Common myeloid progenitor, CD34-positive (primary cell): ENCODE measurements at regions of chr9 and their contacts with region 1.

Region 1: DNA sequence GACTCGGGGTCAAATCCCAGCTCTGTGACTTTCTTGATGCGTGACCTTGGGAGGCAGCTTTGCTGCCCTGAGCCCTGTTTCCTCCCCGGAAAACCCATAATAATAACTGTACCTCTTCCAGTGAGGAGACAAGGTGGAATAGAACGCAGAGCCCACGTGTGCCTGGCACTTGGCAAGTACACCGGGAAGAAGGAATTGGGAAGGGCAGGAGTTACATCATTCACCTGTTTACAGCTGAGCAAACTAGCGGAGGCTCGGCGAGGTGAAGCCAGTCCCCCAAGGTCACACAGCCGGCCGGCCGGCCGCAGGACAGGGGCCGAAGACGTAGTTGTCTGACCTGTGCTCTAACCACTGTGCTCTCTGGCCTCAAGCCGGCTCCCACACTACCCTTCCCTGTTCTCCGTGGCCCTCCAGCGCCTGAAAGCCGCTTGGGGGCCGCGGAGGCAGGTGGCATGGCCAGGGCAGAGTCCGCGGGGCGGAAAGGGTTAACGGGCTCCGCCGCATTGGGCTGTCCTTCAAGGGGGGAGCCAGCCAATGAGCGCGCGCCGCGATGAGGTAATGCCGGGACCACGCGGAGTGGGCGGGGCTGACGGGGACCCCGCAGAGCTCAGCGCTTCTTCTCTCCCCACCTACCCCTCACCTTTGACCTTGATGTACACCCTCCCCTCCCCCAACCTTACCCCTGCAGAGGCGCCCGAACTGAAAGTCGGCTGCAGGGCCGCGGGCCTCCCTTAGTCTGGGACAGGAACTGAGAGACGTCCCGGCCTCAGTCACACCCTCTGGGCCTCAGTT is 125.2 kb downstream of the C9orf50 start:
- DNase-seq: peak; percentile 78 to 91 (median 91)
- H3K4me3 ChIP-seq: peak overlapping the region; percentile 9 to 83 (median 73)
- H3K27ac ChIP-seq: peak overlapping the region in 1 of 2 experiments; percentile 73
- H3K4me1 ChIP-seq: peaks cover 0 to 60% (median 35%) of the 10 kb centered on the region in 4 experiments
- H3K27me3 ChIP-seq: no peaks in the 10 kb centered on the region

Region 2: DNA sequence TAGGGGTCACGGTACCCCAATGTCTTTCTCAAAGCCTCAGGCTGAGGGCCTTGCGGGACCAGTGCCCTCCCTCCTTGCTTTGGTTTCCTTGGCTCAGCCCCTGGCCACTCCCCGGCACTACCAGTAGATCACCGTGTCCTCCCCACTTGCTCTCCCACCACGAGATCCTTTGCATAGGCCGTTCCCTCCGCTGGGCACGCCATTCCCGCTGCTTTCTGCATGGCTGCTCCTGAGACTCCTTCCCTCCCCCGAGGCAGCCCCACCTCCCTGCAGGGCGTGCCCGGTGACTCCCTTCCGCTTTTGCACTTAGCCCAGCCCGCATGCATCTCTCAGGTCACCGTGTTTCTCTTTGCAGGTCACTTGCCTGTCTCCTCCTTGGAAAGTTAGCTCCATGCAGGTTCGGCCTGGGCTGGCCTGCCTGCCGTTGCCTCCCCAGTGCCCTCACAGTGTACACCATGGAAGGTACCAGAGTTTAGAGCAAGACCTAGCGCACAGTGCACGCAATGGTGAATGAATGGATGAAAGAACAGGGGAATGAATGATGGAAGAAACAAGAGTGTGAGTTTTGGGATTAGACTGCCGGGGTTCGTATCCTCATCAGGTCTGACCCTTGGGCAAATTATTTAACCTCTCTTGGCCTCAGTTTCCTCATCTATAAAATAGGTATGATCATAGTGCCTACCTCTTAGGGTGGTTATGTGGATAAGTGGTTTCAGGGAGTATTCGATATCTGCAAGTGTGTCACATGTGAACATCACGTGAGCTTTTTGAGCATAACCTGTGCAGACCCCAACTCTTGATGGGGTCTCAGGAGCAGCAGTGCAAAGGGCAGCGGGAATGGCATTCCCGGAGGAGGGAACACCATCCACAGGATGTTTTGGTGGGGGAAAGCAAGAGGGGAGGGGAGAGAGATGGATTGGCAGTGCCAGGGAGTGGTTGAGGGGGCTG is 89.2 kb before region 1 on chr9:
- CTCF ChIA-PET with region 1: no interaction called
- POLR2A ChIA-PET with region 1: no interaction called
- DNase-seq: no peak
- H3K4me3 ChIP-seq: no peak overlapping the region
- H3K27ac ChIP-seq: no peak overlapping the region
- H3K4me1 ChIP-seq: peaks cover 0 to 23% (median 15%) of the 10 kb centered on the region in 4 experiments
- H3K27me3 ChIP-seq: no peaks in the 10 kb centered on the region

Region 3: GRCh38 chr9:129482521-129483414 is 13.0 kb before region 1 on chr9:
- CTCF ChIA-PET with region 1: interaction called, 4 read pairs
- POLR2A ChIA-PET with region 1: interaction called, 10 read pairs
- DNase-seq: peak in 2 of 3 donors; percentile 60 to 72
- H3K4me3 ChIP-seq: peak overlapping the region in 5 of 7 experiments; percentile 15 to 72 (median 59)
- H3K27ac ChIP-seq: peak overlapping the region in 1 of 2 experiments; percentile 77
- H3K4me1 ChIP-seq: peaks cover 0 to 36% (median 28%) of the 10 kb centered on the region in 4 experiments
- H3K27me3 ChIP-seq: no peaks in the 10 kb centered on the region